Activated CD4-positive, alpha-beta T cell treated with anti-CD3 and anti-CD28 coated beads, Interleukin-2, amount 10 ng/mL, durations not matched to agents 24 days and 14 days (primary cell): ENCODE measurements at regions of chr5 and their contacts with region 1.

Region 1: DNA sequence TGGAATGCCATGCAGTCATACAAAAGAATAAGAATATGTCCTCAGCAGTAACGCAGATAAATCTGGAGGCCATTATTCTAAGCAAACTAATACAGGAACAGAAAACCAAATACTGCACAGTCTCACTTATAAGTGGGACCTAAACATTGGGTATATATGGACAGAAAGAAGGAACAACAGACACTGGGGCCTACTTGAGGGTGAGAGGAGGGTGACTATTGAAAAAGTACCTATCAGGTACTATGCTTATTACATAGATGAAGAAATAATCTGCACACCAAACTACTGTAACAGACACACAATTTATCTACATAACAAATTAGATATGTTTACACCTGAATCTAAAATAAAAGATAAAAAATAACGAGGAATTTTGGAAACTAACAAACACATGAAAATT is 38.8 kb downstream of the MEIKIN start:
- DNase-seq: no peak
- H3K4me3 Mint-ChIP-seq: no peak overlapping the region
- H3K27ac Mint-ChIP-seq: peak overlapping the region; percentile 5
- H3K4me1 Mint-ChIP-seq: peaks cover 10% of the 10 kb centered on the region
- H3K27me3 Mint-ChIP-seq: peaks cover 30% of the 10 kb centered on the region

Region 2: DNA sequence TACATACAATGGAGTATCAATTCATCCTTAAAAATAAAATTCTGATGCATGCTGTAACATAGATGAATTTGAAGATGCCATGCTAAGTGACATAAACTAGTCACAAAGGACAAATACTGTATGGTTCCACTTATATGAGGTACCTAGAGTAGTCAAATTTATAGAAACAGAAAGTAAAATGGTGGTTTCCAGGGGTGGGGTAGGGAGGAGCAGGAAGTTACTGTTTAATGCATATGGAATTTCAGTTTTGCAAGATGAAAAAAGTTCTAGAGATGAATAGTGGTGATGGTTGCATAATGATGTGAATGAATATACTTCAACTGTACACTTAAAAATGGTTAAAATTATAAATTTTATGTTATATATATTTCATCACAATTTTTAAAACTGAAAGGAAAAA is 52.5 kb before region 1 on chr5:
- intact Hi-C with region 1: loop called (anchors 2 kb)
- DNase-seq: peak; percentile 74
- H3K4me3 Mint-ChIP-seq: peak overlapping the region; percentile 43
- H3K27ac Mint-ChIP-seq: peak overlapping the region; percentile 46
- H3K4me1 Mint-ChIP-seq: peaks cover 19% of the 10 kb centered on the region
- H3K27me3 Mint-ChIP-seq: peaks cover 12% of the 10 kb centered on the region

Region 3: GRCh38 chr5:131877873-131878272 is 28.8 kb before region 1 on chr5:
- intact Hi-C with region 1: no loop called
- DNase-seq: no peak
- H3K4me3 Mint-ChIP-seq: no peak overlapping the region
- H3K27ac Mint-ChIP-seq: no peak overlapping the region
- H3K4me1 Mint-ChIP-seq: peaks cover 4% of the 10 kb centered on the region
- H3K27me3 Mint-ChIP-seq: peaks cover 13% of the 10 kb centered on the region